ENCODE measurements at regions of chr2 and their contacts with region 1.

Region 1: GRCh38 chr2:145043399-145043834 is 523.5 kb upstream of the ZEB2 start:
- DNase-seq: peak; percentile 2
- H3K4me3 ChIP-seq: no peak overlapping the region
- H3K27ac ChIP-seq: no peak overlapping the region
- H3K4me1 ChIP-seq: no peaks in the 10 kb centered on the region
- CTCF ChIP-seq: peak; percentile 42; the same call in 1 of the 2 replicates

Region 2: DNA sequence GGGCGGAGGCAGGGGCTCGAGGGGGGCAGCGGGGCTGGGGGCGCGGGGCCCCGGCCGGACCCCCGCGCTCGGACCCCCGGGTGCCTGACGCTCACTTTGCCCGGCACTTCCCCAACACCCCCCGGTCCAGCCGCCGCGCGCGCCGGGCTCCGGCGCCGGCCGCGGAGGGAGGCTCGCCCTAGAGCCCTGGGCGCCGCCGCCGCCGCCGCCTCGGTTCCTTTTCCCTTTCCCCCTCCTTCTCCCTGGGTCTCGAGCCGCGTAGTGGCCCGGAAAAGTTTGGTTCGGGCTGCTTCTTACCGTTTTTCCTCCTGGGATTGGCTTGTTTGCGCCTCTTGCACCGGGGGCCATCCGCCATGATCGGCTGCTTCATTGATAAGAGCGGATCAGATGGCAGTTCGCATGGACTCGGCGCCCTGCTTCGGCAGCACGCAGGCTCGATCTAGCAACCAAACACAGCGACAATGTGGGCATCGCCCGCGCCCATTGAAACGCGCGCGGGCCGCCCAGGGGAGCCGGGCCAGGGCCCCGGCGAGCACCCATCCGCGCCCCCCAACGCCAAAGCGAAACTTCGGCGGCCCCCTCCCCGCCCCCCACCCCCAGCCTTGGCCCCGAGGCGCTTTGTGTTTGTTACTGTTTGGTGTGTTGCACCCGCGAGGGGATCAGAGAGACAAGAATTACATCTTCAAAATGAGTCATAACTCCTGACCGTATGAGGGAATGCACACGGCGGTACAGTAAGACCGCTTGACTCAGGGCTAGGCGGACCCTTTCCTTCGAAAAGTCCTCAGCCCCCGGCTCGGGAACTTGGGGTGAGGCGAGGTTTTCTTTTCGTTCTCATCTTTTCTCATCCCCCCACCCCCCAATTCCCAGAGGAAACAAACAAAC is 526.2 kb before region 1 on chr2:
- CTCF ChIA-PET with region 1: no interaction called
- POLR2A ChIA-PET with region 1: no interaction called
- intact Hi-C with region 1: loop called (anchors 10 kb)
- DNase-seq: peak; percentile 64
- H3K4me3 ChIP-seq: peak overlapping the region; percentile 83
- H3K27ac ChIP-seq: no peak overlapping the region
- H3K4me1 ChIP-seq: peaks cover 36% of the 10 kb centered on the region
- CTCF ChIP-seq: no peak